ENCODE measurements at regions of chr7 and their contacts with region 1.

Region 1: GRCh38 chr7:17298207-17298839 is at the start of gene AHR:
- DNase-seq: peak; percentile 95
- ATAC-seq: peak; percentile 96
- total RNA-seq, gene AHR: 29.6 TPM

Region 2: GRCh38 chr7:16739863-16740622 is 558.3 kb before region 1 on chr7:
- intact Hi-C with region 1: loop called (anchors 10 kb)
- DNase-seq: no peak
- ATAC-seq: peak; percentile 97

Region 3: GRCh38 chr7:16982640-16983350 is 315.5 kb before region 1 on chr7:
- intact Hi-C with region 1: loop called (anchors 5 kb)
- DNase-seq: no peak
- ATAC-seq: no peak

Region 4: DNA sequence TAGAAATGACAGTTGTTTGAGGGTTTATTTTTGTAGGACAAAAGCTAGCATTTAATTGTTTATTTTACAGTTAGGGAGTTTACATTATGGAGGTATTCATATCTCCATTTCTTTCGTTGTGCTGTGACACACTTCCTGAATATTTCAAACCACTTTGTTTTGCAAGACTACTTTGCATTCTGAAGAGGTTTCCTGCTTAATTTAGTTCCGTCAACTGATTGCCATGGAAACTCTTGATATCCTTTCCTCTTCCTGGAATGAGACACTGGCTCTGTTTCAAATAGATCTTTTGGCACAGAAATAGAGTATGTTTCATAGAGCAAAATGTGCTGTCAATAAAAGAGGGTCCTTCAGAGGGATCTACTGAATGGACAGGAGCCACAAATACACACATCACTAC is 257.0 kb before region 1 on chr7:
- intact Hi-C with region 1: loop called (anchors 10 kb)
- DNase-seq: no peak
- ATAC-seq: peak; percentile 50

Region 5: DNA sequence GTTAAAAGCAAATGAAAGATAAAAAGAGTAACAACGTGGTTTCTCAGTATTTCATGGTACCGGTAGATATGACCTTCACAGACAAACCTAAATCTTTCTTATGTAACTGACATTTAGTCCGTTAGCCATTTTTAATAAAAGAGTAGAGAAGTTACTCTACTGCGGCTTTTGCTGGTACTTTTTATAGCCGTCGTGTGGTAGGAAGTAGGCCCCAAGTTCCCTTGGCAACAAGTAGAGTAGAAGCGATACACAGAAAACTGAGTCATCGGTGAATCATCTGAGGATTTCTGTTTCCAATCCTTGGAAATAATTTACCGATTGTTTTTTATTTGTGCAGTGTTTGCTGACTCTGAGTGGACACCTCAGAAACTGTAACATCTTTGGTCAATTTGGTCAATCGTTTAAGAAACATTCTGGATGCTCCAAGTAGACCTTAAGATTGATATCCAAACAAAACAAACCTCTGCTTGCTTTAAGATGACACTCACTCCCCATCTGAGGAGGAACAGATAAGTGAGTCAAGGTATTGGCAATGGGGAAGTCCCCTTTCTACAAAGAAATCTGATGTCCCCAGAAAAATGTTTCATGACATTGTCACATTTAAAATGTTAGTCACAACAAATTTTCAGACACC is 63.8 kb before region 1 on chr7:
- intact Hi-C with region 1: loop called (anchors 5 kb)
- DNase-seq: no peak
- ATAC-seq: peak; percentile 54

Region 6: GRCh38 chr7:17333212-17333611 is 34.9 kb after region 1 on chr7:
- intact Hi-C with region 1: loop called (anchors 1 kb)
- DNase-seq: no peak
- ATAC-seq: no peak

Region 7: GRCh38 chr7:17530741-17531417 is 232.6 kb after region 1 on chr7:
- intact Hi-C with region 1: loop called (anchors 5 kb)
- DNase-seq: no peak
- ATAC-seq: no peak

Measured in Right ventricle myocardium inferior (tissue), 1 donor.